ENCODE measurements at regions of chr1 and their contacts with region 1.

Region 1: GRCh38 chr1:231866392-231867331 is 240.1 kb downstream of the DISC1 start:
- DNase-seq: peak; percentile 72
- H3K4me3 ChIP-seq: no peak overlapping the region
- H3K27ac ChIP-seq: no peak overlapping the region
- H3K4me1 ChIP-seq: no peaks in the 10 kb centered on the region
- H3K27me3 ChIP-seq: no peaks in the 10 kb centered on the region
- CTCF ChIP-seq: peak; percentile 89

Region 2: DNA sequence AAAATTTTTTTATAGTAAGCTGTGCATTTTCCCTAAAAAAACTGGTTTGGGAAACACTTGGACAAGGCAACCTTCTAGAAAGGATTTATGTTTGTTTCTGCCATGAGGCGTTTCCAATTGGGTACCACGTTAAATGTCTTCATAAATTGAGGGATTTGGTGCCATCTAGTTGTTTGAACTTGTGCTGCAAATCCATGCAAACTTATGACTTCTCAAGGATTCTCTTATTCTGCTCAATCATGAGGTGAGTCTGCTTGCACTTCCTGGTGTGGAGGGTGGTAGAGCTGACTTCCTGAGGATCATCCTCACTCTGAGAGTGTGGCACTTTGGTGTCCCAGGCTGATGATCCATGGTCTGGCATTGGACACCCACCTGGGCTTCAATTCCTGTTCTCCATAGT is 1305.6 kb after region 1 on chr1:
- CTCF ChIA-PET with region 1: no interaction called
- POLR2A ChIA-PET with region 1: no interaction called
- intact Hi-C with region 1: loop called (anchors 10 kb)
- DNase-seq: peak; percentile 75
- H3K4me3 ChIP-seq: no peak overlapping the region
- H3K27ac ChIP-seq: no peak overlapping the region
- H3K4me1 ChIP-seq: no peaks in the 10 kb centered on the region
- H3K27me3 ChIP-seq: no peaks in the 10 kb centered on the region
- CTCF ChIP-seq: peak; percentile 61

Region 3: GRCh38 chr1:233240829-233241682 is 1374.4 kb after region 1 on chr1:
- CTCF ChIA-PET with region 1: no interaction called
- POLR2A ChIA-PET with region 1: no interaction called
- intact Hi-C with region 1: loop called (anchors 2 kb)
- DNase-seq: peak; percentile 60
- H3K4me3 ChIP-seq: no peak overlapping the region
- H3K27ac ChIP-seq: no peak overlapping the region
- H3K4me1 ChIP-seq: peaks cover 6% of the 10 kb centered on the region
- H3K27me3 ChIP-seq: no peaks in the 10 kb centered on the region
- CTCF ChIP-seq: peak; percentile 84